MCF 10A (cell line): ENCODE measurements at regions of chr21 and their contacts with region 1.

Region 1: DNA sequence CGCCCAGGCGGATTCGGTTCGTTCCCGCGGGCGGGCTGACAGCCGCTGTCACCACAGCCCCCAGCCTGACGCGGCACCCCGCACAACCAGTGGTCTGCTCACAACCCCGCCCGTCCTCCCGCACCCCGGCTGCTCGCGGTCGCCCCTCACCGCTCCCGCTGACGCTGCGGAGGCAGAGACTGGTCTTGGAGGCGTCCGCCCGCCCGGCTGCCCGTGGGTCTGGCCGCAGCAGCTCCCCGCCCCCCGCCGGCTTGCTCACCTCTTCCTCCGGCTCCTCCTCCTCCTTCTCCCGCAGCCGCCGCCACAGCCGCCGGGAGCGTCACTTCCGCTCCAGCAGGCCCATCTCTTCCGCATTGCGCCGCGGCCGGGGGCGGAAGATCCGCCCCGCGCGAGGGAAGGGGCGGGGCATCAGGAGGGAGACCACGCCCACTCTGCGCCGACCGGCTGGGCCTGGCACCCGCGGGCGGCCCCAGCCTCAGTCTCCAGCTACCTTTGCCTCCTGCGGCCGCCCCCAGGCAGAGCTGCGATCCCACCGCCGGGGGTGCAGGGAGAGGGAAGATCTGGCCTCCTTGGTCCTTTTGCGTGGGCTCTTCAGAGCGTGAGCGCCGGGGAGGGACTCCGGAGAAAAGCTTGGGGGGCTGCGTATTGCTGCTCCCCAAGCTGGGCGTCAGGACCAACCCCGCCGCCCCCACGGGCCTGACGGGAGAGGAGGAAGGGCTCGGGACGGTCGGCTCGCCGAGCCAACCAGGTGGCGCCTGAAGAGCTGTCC is at the start of gene SYNJ1:
- DNase-seq: peak; percentile 94
- H3K4me3 Mint-ChIP-seq: peak within 1 kb of the TSS; percentile 98
- H3K27ac Mint-ChIP-seq: peak within 1 kb of the TSS; percentile 93
- H3K4me1 Mint-ChIP-seq: peaks cover 17% of the 10 kb centered on the region
- H3K27me3 Mint-ChIP-seq: no peaks in the 10 kb centered on the region
- CTCF ChIP-seq: no peak
- total RNA-seq, gene SYNJ1: 9.4 and 9.7 TPM in 2 replicates

Region 2: DNA sequence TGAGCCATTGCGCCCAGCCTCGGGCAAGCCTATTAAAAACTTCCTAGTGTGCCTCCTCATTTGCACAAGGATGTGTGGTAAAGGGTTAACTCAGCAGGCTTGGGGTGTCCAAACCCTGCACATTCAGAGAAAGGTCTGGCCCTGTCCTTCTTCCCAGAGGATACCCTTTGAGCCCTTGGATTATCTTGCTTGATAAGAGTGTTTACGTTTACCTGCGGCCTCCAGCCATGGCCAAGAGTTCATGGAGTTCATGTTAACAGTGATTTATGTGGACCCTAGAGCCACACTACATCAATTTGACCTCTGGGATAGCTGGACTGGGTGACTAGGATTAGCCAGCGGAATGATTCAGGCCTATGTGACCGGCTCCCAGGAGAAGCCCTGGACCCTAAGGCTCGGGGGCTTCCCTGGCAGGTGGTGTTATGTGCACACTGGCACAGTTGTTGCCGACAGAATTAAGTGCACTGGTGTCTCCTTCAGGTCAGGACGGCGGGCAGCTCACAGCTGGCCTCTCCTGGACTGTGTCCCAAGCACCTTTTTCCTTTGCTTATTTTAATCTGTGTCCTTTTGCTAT is 134.9 kb before region 1 on chr21:
- CTCF ChIA-PET with region 1: no interaction called
- POLR2A ChIA-PET with region 1: no interaction called
- intact Hi-C with region 1: no loop called
- DNase-seq: no peak
- H3K4me3 Mint-ChIP-seq: no peak overlapping the region
- H3K27ac Mint-ChIP-seq: no peak overlapping the region
- H3K4me1 Mint-ChIP-seq: peaks cover 13% of the 10 kb centered on the region
- H3K27me3 Mint-ChIP-seq: no peaks in the 10 kb centered on the region
- CTCF ChIP-seq: no peak

Region 3: GRCh38 chr21:32612075-32612998 is 115.5 kb before region 1 on chr21 and contains the start of gene CFAP298:
- CTCF ChIA-PET with region 1: no interaction called
- POLR2A ChIA-PET with region 1: interaction called, 24 read pairs
- intact Hi-C with region 1: loop called (anchors 2 kb)
- DNase-seq: peak; percentile 91
- H3K4me3 Mint-ChIP-seq: peak within 1 kb of the TSS; percentile 90
- H3K27ac Mint-ChIP-seq: peak within 1 kb of the TSS; percentile 99
- H3K4me1 Mint-ChIP-seq: no peaks in the 10 kb centered on the region
- H3K27me3 Mint-ChIP-seq: peaks cover 28% of the 10 kb centered on the region
- CTCF ChIP-seq: no peak
- total RNA-seq, gene CFAP298: 52.7 and 54.2 TPM in 2 replicates

Region 4: DNA sequence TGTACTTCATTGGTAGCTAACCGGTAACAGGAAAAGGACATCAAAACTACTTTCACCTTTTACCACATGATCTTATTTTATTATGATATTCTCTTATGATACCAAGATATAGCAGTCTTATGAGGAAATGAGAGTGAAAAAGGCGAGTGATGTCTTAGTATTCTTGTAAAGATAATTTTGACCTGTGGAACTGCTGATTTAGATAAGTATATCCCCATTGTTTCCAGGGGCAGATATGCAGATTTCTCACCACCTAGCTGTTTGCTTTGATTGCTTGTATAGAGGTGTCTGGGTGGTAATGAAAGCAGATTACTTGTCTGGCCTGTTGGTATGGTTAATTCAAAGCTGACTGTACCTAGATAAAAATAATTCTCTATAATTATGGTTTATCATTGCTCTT is 53.1 kb before region 1 on chr21:
- CTCF ChIA-PET with region 1: no interaction called
- POLR2A ChIA-PET with region 1: interaction called, 3 read pairs
- intact Hi-C with region 1: loop called (anchors 5 kb)
- DNase-seq: no peak
- H3K4me3 Mint-ChIP-seq: no peak overlapping the region
- H3K27ac Mint-ChIP-seq: no peak overlapping the region
- H3K4me1 Mint-ChIP-seq: no peaks in the 10 kb centered on the region
- H3K27me3 Mint-ChIP-seq: no peaks in the 10 kb centered on the region
- CTCF ChIP-seq: no peak

Region 5: DNA sequence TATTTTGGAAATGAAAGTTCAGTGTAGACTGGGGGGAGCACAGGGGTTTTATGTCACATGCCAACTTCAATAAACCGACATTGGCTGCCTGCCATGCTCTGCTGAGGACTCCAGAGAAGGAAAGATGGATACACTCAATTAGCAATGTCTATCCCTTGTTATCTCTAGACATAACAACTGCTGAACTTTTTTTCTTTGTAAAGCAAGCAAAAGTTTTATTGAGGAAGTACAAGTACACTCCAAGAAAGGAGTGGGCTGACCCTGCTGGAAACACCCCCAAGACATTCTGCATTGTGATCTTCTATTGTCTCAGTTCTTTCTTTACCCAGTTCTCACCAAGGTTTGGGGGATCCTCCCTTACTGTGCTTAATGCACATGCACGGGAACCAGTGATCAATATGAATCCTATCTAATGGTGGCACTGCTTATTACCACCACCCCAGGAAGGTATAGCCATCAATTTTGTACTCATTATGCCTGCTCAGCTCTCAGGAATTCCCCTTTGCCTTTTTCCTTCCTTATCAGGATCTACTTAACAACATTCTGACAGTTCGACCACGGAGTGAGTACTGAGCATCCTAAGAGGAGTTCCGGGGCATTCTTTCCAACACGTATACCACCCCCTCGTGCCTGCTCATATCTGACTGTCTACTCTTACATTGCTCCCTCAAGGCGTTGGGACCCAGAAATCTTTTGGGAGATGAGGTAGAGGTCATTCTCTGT is 28.7 kb before region 1 on chr21:
- CTCF ChIA-PET with region 1: no interaction called
- POLR2A ChIA-PET with region 1: interaction called, 13 read pairs
- intact Hi-C with region 1: no loop called
- DNase-seq: no peak
- H3K4me3 Mint-ChIP-seq: no peak overlapping the region
- H3K27ac Mint-ChIP-seq: no peak overlapping the region
- H3K4me1 Mint-ChIP-seq: peaks cover 8% of the 10 kb centered on the region
- H3K27me3 Mint-ChIP-seq: no peaks in the 10 kb centered on the region
- CTCF ChIP-seq: no peak

Region 6: DNA sequence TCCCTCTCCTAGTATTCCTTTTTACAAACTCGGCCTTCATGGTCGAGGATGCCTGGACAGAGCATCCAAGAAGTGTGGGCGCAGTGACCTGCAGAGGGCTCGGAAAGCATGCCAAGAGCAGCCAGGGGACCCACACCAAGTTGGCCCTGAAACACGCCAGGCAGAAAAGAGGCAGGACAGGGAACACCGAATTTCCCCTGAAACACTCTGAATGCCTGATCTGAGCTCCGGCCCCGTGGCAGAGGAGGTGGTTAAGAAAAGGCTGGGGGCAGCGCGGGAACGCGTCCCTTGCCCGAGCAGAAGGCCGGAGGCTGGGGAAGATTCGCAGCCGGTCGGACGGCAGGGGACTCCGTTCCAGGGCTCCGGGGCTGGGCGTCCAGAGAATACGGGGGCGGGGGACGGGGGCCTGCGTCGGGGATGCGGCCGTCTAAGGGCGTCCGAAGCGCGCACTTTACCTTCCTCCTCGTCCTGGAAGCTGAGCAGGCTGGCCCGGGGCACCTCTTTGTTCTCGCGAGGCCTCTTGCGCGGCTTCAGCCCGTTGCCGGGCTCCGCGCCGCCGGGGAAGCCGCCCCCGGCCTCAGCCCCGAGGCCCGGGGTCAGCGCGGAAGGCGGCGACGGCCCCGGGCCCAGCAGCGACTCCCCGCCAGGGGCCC is 43.1 kb after region 1 on chr21:
- CTCF ChIA-PET with region 1: interaction called, 8 read pairs
- POLR2A ChIA-PET with region 1: interaction called, 103 read pairs
- intact Hi-C with region 1: loop called (anchors 2 kb)
- DNase-seq: peak; percentile 61
- H3K4me3 Mint-ChIP-seq: peak overlapping the region; percentile 79
- H3K27ac Mint-ChIP-seq: peak overlapping the region; percentile 93
- H3K4me1 Mint-ChIP-seq: peaks cover 26% of the 10 kb centered on the region
- H3K27me3 Mint-ChIP-seq: no peaks in the 10 kb centered on the region
- CTCF ChIP-seq: no peak

Region 7: GRCh38 chr21:32900814-32901213 is 172.9 kb after region 1 on chr21:
- CTCF ChIA-PET with region 1: no interaction called
- POLR2A ChIA-PET with region 1: no interaction called
- intact Hi-C with region 1: no loop called
- DNase-seq: no peak
- H3K4me3 Mint-ChIP-seq: no peak overlapping the region
- H3K27ac Mint-ChIP-seq: no peak overlapping the region
- H3K4me1 Mint-ChIP-seq: no peaks in the 10 kb centered on the region
- H3K27me3 Mint-ChIP-seq: peaks cover 83% of the 10 kb centered on the region
- CTCF ChIP-seq: no peak